HepG2 (cell line): ENCODE measurements at regions of chr12 and their contacts with region 1.

Region 1: DNA sequence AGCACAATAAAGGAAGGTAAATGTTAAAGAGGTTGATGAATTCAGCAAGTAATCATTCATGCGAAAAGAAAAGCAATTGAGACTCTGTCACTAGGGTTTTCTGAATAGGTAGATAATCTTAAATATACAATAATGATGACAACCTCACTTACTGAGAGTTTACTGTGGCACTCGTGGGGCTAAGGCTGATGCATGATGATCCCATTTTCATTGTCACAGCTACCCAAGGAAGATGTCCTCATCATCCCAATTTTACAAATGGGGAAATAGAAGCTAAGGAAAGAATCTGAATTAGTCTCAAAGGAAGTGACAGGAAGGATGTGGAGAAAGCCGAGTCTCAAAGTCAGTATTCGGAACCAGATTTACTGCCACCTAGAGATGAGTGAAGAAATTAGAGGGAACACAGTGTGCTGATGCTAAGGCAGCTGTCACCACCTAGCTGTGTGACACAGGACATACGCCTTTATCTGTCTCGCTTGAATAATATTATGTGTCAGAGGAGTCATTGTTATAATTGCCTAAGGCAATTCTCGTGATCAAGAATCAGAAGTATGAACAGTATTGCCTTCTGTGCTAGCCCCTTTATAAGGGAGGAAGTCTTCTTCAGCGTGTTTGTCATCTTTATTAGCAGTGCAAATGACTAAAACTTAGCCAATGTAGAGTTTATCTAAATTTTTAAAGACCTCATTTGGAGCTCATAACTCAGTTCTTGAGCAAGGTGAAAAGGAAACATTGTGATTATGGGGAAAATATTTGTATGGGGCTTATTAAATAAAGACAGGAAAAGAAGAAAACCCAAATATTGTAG is 63.2 kb downstream of the ERGIC2 start:
- DNase-seq: peak; percentile 62
- ATAC-seq: peak; percentile 100
- H3K4me3 ChIP-seq: no peak overlapping the region
- H3K27ac ChIP-seq: no peak overlapping the region
- H3K4me1 ChIP-seq: no peaks in the 10 kb centered on the region
- H3K27me3 ChIP-seq: no peaks in the 10 kb centered on the region
- CTCF ChIP-seq: peak; percentile 79
- EP300 ChIP-seq: no peak
- POLR2A ChIP-seq: no peak
- RAD21 ChIP-seq: peak; percentile 53

Region 2: GRCh38 chr12:29073628-29074239 is 244.0 kb before region 1 on chr12:
- CTCF ChIA-PET with region 1: interaction called, 15 read pairs
- POLR2A ChIA-PET with region 1: no interaction called
- in situ Hi-C with region 1: no loop called
- intact Hi-C with region 1: loop called (anchors 5 kb)
- DNase-seq: peak; percentile 13
- ATAC-seq: peak; percentile 74
- H3K4me3 ChIP-seq: no peak overlapping the region
- H3K27ac ChIP-seq: no peak overlapping the region
- H3K4me1 ChIP-seq: no peaks in the 10 kb centered on the region
- H3K27me3 ChIP-seq: no peaks in the 10 kb centered on the region
- CTCF ChIP-seq: peak; percentile 57
- EP300 ChIP-seq: no peak
- POLR2A ChIP-seq: no peak
- RAD21 ChIP-seq: no peak

Region 3: GRCh38 chr12:29088611-29089219 is 229.0 kb before region 1 on chr12:
- CTCF ChIA-PET with region 1: interaction called, 3 read pairs
- POLR2A ChIA-PET with region 1: no interaction called
- in situ Hi-C with region 1: no loop called
- intact Hi-C with region 1: loop called (anchors 1 kb)
- DNase-seq: peak; percentile 1
- ATAC-seq: no peak
- H3K4me3 ChIP-seq: no peak overlapping the region
- H3K27ac ChIP-seq: no peak overlapping the region
- H3K4me1 ChIP-seq: no peaks in the 10 kb centered on the region
- H3K27me3 ChIP-seq: no peaks in the 10 kb centered on the region
- CTCF ChIP-seq: no peak
- EP300 ChIP-seq: no peak
- POLR2A ChIP-seq: no peak
- RAD21 ChIP-seq: no peak